Motor neuron (in vitro differentiated cells): ENCODE measurements at regions of chr20 and their contacts with region 1.

Region 1: GRCh38 chr20:59403261-59403961 is 103.0 kb downstream of the EDN3 start:
- ATAC-seq: peak; percentile 73 to 95 (median 77)
- H3K4me3 ChIP-seq: peak overlapping the region; percentile 6 to 35 (median 15)
- H3K27ac ChIP-seq: no peak overlapping the region
- H3K4me1 ChIP-seq: peaks cover 59 to 64% of the 10 kb centered on the region in 2 donors

Region 2: GRCh38 chr20:57985278-57985677 is 1418.1 kb before region 1 on chr20:
- in situ Hi-C with region 1: no loop called
- ATAC-seq: peak in 6 of 8 experiments; percentile 25 to 69 (median 46)
- H3K4me3 ChIP-seq: no peak overlapping the region
- H3K27ac ChIP-seq: no peak overlapping the region
- H3K4me1 ChIP-seq: peaks cover 4 to 14% of the 10 kb centered on the region in 2 donors

Region 3: GRCh38 chr20:59087829-59088433 is 315.5 kb before region 1 on chr20:
- in situ Hi-C with region 1: loop called in 1 of 9 experiments (anchors 25 kb)
- ATAC-seq: peak; percentile 26 to 89 (median 58)
- H3K4me3 ChIP-seq: no peak overlapping the region
- H3K27ac ChIP-seq: no peak overlapping the region
- H3K4me1 ChIP-seq: no peaks in the 10 kb centered on the region

Region 4: GRCh38 chr20:59598625-59599310 is 195.4 kb after region 1 on chr20:
- in situ Hi-C with region 1: no loop called
- ATAC-seq: peak; percentile 29 to 89 (median 84)
- H3K4me3 ChIP-seq: no peak overlapping the region
- H3K27ac ChIP-seq: no peak overlapping the region
- H3K4me1 ChIP-seq: peaks cover 16 to 28% of the 10 kb centered on the region in 2 donors